Calu3 (cell line): ENCODE measurements at regions of chr2 and their contacts with region 1.

Region 1: DNA sequence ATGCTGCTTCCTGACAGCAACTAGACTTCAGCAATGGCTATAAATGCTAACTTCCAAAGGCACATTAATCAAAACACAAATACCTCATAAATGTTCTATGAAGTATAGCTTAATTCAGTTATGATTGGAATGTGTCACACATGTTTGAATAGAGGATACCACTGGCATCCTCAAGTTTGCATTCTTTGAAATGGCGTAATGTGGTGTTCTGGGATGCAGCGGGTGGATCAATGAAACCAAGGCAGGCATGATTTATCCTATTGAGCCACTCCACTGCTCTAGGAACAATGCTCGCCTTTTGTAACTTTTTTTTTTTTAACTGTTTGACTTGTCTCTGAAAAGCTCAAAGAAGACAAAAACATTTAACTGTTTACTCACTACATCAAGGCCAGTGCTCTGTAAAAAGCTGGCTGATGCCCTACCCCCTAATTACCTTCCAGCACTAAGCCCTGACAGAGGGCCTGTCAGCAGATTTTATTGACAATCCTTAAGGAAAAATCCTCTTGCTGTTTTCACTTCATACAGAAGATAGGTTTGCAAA is 278.8 kb upstream of the SESTD1 start:
- DNase-seq: peak; percentile 30
- H3K4me3 Mint-ChIP-seq: no peak overlapping the region
- H3K27ac Mint-ChIP-seq: no peak overlapping the region
- H3K4me1 Mint-ChIP-seq: peaks cover 41% of the 10 kb centered on the region
- H3K27me3 Mint-ChIP-seq: no peaks in the 10 kb centered on the region
- CTCF ChIP-seq: no peak

Region 2: DNA sequence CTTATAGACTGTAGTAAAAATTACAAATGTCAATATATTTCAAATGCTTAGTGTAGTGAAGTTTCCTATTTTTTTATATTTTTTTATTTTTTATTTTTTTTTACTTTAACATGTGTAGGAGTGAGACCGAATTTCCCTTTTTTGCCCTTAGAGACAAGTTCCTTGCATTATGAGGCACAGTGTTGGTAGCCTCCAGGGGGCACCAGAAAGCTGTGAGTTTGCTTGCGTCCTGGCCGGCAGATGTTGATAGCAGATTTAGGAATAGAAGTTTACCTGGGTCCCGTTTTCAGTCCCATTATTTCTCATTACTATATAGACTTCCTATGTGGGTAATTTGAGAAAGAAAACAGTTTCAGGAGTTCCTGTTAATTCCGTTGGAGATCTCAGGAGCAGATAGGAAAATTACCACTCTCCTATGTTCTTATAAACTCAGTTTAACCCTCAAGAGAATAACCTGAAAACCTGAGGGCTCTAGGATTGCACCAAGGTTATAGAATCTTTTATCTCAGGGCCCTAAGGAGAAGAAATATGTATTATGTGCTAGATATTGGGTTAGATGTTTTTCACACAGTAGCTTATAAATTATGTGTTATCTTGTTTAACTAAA is 121.3 kb before region 1 on chr2:
- CTCF ChIA-PET with region 1: no interaction called
- intact Hi-C with region 1: loop called (anchors 10 kb)
- DNase-seq: peak; percentile 85
- H3K4me3 Mint-ChIP-seq: no peak overlapping the region
- H3K27ac Mint-ChIP-seq: no peak overlapping the region
- H3K4me1 Mint-ChIP-seq: peaks cover 6% of the 10 kb centered on the region
- H3K27me3 Mint-ChIP-seq: no peaks in the 10 kb centered on the region
- CTCF ChIP-seq: peak; percentile 84

Region 3: DNA sequence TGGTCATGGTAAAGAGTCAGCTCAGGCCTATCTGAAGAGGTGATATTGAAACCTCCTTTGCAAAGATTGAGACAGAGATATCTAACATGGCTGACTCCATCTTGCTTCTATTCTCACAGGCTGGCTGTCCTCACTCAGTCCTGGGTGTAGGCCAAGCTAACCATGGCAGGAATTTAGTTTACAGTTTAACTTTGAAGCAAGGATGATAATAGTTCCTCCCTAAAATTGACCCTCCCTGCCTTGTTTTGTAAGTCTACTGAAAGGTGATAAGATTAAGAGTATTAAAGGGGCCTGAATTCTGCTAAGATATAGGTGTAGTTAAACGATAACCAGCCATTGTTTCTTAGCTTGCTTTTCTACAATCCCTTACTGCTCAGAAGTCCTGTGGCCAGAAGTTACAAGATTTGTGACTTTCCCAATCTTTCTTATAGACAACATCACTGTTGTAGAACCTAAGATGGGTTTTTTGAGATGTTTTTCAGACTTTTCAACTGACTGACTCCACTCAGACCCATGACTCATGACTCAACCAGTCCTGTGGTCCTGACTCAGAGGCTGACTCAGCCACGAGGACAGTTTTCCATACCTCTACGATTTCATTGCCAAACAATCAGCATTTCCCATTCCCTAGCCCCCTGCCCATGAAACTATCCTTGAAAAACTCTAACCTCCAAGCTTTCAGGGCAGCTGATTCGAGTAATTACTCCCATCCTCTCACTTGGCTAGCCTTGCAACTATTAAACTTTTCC is 83.1 kb before region 1 on chr2:
- CTCF ChIA-PET with region 1: interaction called, 4 read pairs
- intact Hi-C with region 1: loop called (anchors 2 kb)
- DNase-seq: peak; percentile 75
- H3K4me3 Mint-ChIP-seq: peak overlapping the region; percentile 7
- H3K27ac Mint-ChIP-seq: peak overlapping the region; percentile 98
- H3K4me1 Mint-ChIP-seq: peaks cover 32% of the 10 kb centered on the region
- H3K27me3 Mint-ChIP-seq: no peaks in the 10 kb centered on the region
- CTCF ChIP-seq: no peak

Region 4: DNA sequence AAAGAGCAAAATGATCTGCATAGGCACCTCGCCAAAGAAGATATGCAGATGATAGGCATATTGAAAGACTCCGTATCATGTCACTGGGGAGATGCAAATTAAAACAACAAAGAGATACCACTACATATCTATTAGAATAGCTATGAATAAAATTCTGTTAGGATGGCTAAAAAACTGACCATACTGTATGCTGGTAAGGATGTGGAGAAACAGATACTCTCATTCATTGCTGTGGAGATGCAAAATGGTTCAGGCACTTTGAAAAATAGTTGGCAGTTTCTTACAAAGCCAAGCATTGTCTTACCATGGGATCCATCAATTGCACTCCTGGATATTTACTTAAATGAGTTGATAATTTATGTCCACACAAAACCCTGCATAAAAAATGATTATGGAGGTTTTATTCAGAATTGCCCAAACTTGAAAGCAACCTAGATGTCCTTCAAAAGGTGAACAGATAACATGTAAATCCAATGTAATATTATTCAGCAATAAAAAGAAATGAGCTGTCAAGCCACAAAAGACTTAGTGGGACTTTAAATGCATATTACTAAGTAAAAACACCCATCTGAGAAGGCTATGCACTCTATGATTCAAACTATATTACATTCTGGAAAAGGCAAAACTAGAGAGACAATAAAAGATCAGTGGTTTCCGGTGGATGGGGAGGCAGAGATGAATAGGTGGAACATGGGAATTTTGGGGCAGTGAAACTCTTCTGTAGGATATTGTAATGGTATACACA is 286.8 kb after region 1 on chr2:
- CTCF ChIA-PET with region 1: no interaction called
- intact Hi-C with region 1: no loop called
- DNase-seq: no peak
- H3K4me3 Mint-ChIP-seq: no peak overlapping the region
- H3K27ac Mint-ChIP-seq: no peak overlapping the region
- H3K4me1 Mint-ChIP-seq: no peaks in the 10 kb centered on the region
- H3K27me3 Mint-ChIP-seq: no peaks in the 10 kb centered on the region
- CTCF ChIP-seq: no peak

Region 5: DNA sequence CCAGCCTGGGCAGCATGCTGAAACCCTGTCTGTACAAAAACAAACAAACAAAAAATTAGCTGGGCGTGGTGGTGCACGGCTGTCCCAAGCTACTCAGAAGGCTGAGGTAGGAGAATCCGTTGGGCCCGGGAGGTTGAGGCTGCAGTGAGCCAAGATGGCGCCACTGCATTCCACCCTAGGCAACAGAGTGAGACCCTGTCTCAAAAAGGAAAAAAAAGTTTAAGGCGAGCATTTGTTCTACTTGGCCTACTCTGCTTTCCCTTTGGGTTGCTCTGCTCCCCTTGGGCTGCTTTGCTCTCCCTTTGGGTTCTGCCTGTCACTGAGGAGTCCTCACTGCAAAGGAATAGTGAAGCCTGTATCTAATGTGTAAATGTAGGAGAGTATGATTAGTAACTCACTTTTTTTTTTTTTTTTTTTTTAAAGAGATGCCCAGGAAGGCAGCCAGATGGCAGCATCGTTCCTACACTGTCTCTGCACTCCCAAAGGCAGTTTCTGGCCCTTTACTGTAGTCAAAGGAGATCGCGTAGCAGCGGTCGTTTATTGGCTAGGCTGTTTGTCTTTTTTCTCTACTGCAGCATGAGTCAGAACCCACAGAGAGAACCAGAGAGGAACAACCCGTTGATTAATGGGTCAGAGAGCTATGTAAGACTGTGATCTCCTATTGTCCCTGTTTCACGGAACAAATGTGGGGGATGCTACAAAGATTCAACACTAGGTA is 582.0 kb after region 1 on chr2:
- CTCF ChIA-PET with region 1: no interaction called
- intact Hi-C with region 1: no loop called
- DNase-seq: peak; percentile 51
- H3K4me3 Mint-ChIP-seq: no peak overlapping the region
- H3K27ac Mint-ChIP-seq: no peak overlapping the region
- H3K4me1 Mint-ChIP-seq: peaks cover 23% of the 10 kb centered on the region
- H3K27me3 Mint-ChIP-seq: no peaks in the 10 kb centered on the region
- CTCF ChIP-seq: peak; percentile 68